CD8-positive, alpha-beta T cell (primary cell): ENCODE measurements at regions of chr9 and their contacts with region 1.

Region 1: GRCh38 chr9:15306757-15307534 is at the start of gene TTC39B:
- DNase-seq: peak; percentile 51 to 90 (median 72)
- ATAC-seq: peak; percentile 75
- H3K4me3 ChIP-seq: peak within 1 kb of the TSS; percentile 85 to 91
- H3K4me3 Mint-ChIP-seq: peak within 1 kb of the TSS; percentile 97
- H3K27ac ChIP-seq: peak within 1 kb of the TSS; percentile 67 to 73
- H3K27ac Mint-ChIP-seq: peak within 1 kb of the TSS; percentile 93
- H3K4me1 ChIP-seq: peaks cover 45% of the 10 kb centered on the region
- H3K4me1 Mint-ChIP-seq: peaks cover 57% of the 10 kb centered on the region
- H3K27me3 ChIP-seq: no peaks in the 10 kb centered on the region
- H3K27me3 Mint-ChIP-seq: no peaks in the 10 kb centered on the region
- CTCF ChIP-seq: no peak
- total RNA-seq, gene TTC39B: 23.3 to 23.8 TPM

Region 2: DNA sequence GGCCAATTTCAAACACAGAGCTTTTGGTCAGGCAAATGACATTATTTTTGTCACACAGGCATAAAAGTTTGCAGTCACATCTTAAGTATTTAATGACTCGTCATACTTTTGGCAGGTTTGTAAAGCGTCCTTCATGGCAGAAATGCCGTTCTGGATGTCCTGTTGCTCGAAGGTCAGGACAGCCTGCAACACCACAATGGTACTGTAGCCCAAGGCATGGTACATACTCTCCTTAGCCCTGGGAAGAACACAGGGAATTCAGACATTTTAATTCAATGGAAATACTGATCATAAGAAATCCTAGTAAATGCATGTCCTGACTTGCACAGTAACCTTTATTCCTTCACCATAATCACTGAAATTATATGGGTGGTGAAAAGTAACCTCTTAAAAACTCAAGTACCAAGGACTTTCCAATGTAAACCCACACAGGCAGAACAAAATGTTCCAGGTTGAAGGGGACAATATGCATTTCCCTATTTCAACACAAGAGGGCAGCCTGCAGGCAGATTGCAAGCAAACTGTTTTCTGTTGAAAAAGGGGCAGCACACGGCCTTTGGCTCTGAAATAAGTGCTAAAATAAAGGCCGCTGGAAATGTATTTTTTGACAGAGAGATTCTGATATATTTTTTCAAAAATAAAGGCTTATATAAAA is 95.7 kb before region 1 on chr9:
- CTCF ChIA-PET with region 1: interaction called, 13 read pairs
- POLR2A ChIA-PET with region 1: no interaction called
- intact Hi-C with region 1: loop called in 1 of 2 experiments (anchors 1 kb)
- DNase-seq: peak; percentile 21 to 75 (median 56)
- ATAC-seq: peak; percentile 56
- H3K4me3 ChIP-seq: no peak overlapping the region
- H3K4me3 Mint-ChIP-seq: no peak overlapping the region
- H3K27ac ChIP-seq: no peak overlapping the region
- H3K27ac Mint-ChIP-seq: no peak overlapping the region
- H3K4me1 ChIP-seq: no peaks in the 10 kb centered on the region
- H3K4me1 Mint-ChIP-seq: peaks cover 4% of the 10 kb centered on the region
- H3K27me3 ChIP-seq: no peaks in the 10 kb centered on the region
- H3K27me3 Mint-ChIP-seq: no peaks in the 10 kb centered on the region
- CTCF ChIP-seq: peak; percentile 90

Region 3: GRCh38 chr9:15277400-15278090 is 29.4 kb before region 1 on chr9:
- CTCF ChIA-PET with region 1: interaction called, 21 read pairs
- POLR2A ChIA-PET with region 1: interaction called, 4 read pairs
- intact Hi-C with region 1: loop called (anchors 1 to 5 kb)
- DNase-seq: peak in 2 of 9 experiments; percentile 49 to 59
- ATAC-seq: no peak
- H3K4me3 ChIP-seq: no peak overlapping the region
- H3K4me3 Mint-ChIP-seq: no peak overlapping the region
- H3K27ac ChIP-seq: no peak overlapping the region
- H3K27ac Mint-ChIP-seq: no peak overlapping the region
- H3K4me1 ChIP-seq: no peaks in the 10 kb centered on the region
- H3K4me1 Mint-ChIP-seq: peaks cover 52% of the 10 kb centered on the region
- H3K27me3 ChIP-seq: no peaks in the 10 kb centered on the region
- H3K27me3 Mint-ChIP-seq: no peaks in the 10 kb centered on the region
- CTCF ChIP-seq: peak; percentile 56

Region 4: DNA sequence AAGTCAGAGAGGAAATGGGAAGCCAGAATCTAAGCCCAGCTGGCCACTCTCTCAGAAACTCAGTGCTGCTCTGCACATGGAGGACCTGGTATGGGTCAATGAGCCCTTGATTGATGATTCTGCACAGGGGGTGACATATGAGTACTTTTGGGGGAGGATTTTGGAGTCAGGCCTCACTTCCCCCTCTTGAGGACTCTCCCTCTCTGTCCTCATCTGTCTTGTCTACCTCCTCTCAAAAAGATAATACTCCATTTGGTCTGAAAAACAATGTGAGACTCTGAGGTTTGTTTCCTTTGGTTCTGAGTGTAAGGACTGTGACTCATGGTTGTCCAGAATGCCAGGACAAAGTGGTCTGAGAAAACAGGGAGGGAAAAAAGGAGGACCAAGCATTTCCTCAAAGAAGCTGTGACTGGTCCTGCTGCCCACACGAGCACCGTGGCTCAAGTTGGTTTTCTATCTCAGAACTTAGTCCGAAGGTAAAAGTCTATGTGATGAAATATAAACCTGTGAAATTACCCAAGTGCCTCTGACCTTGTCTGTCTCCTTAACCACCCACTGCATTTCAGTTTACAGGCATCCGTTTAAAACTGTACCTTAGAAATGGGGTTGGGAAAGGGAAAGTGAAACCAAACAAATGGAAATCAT is 11.1 kb before region 1 on chr9:
- CTCF ChIA-PET with region 1: interaction called, 50 read pairs
- POLR2A ChIA-PET with region 1: interaction called, 19 read pairs
- intact Hi-C with region 1: loop called (anchors 1 to 2 kb)
- DNase-seq: peak in 2 of 9 experiments; percentile 63 to 82
- ATAC-seq: peak; percentile 15
- H3K4me3 ChIP-seq: peak overlapping the region; percentile 44 to 48
- H3K4me3 Mint-ChIP-seq: peak overlapping the region; percentile 81
- H3K27ac ChIP-seq: peak overlapping the region; percentile 74 to 95
- H3K27ac Mint-ChIP-seq: peak overlapping the region; percentile 94
- H3K4me1 ChIP-seq: peaks cover 79% of the 10 kb centered on the region
- H3K4me1 Mint-ChIP-seq: peaks cover 87% of the 10 kb centered on the region
- H3K27me3 ChIP-seq: no peaks in the 10 kb centered on the region
- H3K27me3 Mint-ChIP-seq: no peaks in the 10 kb centered on the region
- CTCF ChIP-seq: no peak

Region 5: DNA sequence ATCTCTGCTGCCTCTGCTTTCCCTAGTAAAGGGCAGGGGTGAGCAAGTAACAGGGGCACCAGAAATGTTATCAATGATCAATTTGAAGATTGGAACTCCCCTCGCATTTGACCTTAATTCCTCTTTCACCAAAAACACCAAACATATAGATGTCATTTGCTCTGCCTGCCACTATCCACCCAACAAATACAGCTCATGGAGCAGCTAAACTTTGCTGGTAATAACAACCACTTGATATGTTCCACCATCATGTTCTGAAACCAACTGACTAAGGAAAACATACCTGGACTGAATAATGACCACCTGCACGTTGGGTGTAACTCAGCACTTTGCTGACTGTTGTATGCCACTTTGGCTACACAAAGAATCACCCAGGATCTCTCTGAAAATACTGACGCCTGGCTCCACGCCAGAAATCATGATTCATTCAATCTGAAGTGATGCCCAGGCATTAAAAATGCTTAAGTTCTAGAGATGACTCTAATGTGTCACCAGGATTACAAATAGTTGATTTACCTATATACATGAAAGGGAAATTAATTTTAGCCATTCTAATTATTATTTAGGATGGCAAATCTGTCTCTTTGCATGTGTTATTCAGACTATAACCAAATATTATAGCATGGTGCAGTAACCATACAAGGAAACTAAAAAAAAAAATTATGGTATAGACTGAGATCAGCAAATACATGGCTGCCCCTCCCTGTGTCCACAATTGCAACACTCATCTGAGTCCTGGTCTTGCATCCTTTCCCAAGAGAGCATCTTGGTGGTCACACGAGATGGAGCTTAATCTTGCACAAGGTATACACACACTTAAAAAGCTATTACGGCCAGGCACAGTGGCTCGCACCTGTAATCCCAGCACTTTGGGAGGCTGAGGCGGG is 43.2 kb after region 1 on chr9:
- CTCF ChIA-PET with region 1: interaction called, 4 read pairs
- POLR2A ChIA-PET with region 1: interaction called, 3 read pairs
- intact Hi-C with region 1: loop called in 1 of 2 experiments (anchors 5 kb)
- DNase-seq: peak in 2 of 9 experiments; percentile 11 to 17
- ATAC-seq: no peak
- H3K4me3 ChIP-seq: no peak overlapping the region
- H3K4me3 Mint-ChIP-seq: no peak overlapping the region
- H3K27ac ChIP-seq: no peak overlapping the region
- H3K27ac Mint-ChIP-seq: no peak overlapping the region
- H3K4me1 ChIP-seq: peaks cover 19% of the 10 kb centered on the region
- H3K4me1 Mint-ChIP-seq: peaks cover 22% of the 10 kb centered on the region
- H3K27me3 ChIP-seq: no peaks in the 10 kb centered on the region
- H3K27me3 Mint-ChIP-seq: no peaks in the 10 kb centered on the region
- CTCF ChIP-seq: no peak

Region 6: DNA sequence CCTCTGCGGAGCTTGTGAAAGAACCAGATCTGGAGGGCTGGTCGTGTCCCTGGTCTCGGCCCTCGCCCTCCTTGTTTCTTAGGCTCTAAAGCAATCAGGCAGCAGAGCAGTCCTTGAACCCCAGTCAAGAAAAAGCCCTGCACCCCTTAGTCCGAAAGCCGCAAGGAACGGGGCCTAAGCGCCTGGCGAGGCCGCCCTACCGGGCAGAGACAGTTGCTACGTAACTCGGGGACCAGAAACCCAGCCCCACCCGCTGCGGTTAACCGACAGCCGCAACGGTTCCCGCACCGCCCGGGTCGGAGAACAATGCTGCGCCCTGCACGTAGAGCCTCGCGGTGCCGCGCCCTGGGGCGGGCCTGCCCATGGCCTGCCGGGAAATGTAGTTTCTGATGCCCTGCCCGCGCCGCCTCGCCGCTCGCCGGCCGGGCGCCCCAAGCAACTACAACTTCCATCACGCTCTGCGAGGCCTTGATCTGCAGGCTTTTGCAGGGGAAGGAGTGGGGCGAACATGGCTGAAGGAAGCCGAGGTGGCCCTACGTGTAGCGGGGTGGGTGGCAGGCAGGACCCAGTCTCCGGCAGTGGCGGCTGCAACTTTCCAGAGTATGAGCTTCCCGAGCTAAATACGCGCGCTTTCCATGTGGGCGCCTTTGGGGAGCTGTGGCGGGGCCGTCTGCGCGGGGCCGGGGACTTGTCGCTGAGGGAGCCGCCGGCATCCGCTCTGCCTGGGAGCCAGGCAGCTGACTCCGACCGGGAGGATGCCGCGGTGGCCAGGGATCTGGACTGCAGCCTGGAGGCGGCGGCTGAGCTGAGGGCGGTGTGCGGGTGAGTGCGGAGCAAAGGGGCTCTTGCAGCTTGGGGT is 115.7 kb after region 1 on chr9 and contains the start of gene SNAPC3:
- CTCF ChIA-PET with region 1: interaction called, 4 read pairs
- POLR2A ChIA-PET with region 1: interaction called, 3 read pairs
- intact Hi-C with region 1: loop called in 1 of 2 experiments (anchors 1 kb)
- DNase-seq: peak; percentile 85 to 96 (median 92)
- ATAC-seq: peak; percentile 95
- H3K4me3 ChIP-seq: peak within 1 kb of the TSS; percentile 65 to 83
- H3K4me3 Mint-ChIP-seq: peak within 1 kb of the TSS; percentile 91
- H3K27ac ChIP-seq: peak within 1 kb of the TSS; percentile 64 to 67
- H3K27ac Mint-ChIP-seq: peak within 1 kb of the TSS; percentile 87
- H3K4me1 ChIP-seq: peaks cover 22% of the 10 kb centered on the region
- H3K4me1 Mint-ChIP-seq: peaks cover 38% of the 10 kb centered on the region
- H3K27me3 ChIP-seq: no peaks in the 10 kb centered on the region
- H3K27me3 Mint-ChIP-seq: no peaks in the 10 kb centered on the region
- CTCF ChIP-seq: no peak
- total RNA-seq, gene SNAPC3: 3.4 to 5.0 TPM

Region 7: DNA sequence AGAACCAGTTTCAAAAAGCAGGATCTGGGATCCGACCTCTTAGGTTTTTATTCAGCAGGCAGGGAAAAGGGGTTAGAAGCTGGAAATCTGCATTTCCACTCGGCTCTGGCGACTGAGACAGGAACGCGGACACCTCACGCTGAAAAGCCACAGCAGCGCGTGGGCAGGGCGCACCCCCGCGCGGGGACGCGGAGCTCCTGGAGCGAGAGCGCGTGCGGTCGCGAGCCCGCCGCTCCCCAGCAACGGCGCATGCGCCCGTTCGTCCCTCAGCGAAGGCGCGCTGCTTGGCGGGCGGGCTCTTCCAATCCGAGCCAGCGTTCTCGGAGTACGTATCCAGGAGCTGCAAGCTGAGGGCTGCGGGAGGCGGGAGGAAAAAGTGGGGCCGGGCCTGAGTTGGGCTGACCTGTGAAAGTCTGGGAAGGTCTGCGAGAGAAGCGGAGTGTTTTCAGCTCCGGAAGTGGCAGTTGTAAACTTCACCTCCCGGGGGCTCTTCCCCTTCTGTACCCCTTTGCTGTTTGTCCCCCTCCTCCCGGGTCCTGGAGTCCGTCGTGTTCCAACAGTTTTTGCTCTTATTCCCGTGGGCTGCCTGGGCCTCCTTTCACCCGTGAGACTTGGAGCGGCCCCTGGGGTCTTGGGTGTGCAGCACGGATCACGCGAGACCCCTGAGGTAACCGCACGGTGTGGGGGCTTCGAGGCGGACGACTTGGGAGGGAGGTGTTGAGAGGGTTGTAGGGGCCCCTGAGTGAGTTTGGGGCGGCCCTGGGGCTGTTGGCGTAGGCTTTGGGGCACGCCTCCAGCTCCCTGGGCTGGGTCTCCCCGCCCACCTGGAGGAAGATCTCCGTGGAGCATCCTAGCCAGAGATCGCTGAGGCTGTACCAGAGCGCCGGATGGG is 245.9 kb after region 1 on chr9 and contains the start of gene CCDC171:
- CTCF ChIA-PET with region 1: no interaction called
- POLR2A ChIA-PET with region 1: no interaction called
- intact Hi-C with region 1: loop called in 1 of 2 experiments (anchors 2 kb)
- DNase-seq: peak; percentile 67 to 96 (median 84)
- ATAC-seq: peak; percentile 79
- H3K4me3 ChIP-seq: peak within 1 kb of the TSS; percentile 88 to 98
- H3K4me3 Mint-ChIP-seq: peak within 1 kb of the TSS; percentile 95
- H3K27ac ChIP-seq: peak within 1 kb of the TSS; percentile 54 to 75
- H3K27ac Mint-ChIP-seq: peak within 1 kb of the TSS; percentile 82
- H3K4me1 ChIP-seq: no peaks in the 10 kb centered on the region
- H3K4me1 Mint-ChIP-seq: peaks cover 9% of the 10 kb centered on the region
- H3K27me3 ChIP-seq: no peaks in the 10 kb centered on the region
- H3K27me3 Mint-ChIP-seq: no peaks in the 10 kb centered on the region
- CTCF ChIP-seq: no peak
- total RNA-seq, gene CCDC171: 1.1 to 1.7 TPM